Mammary epithelial cell (primary cell): ENCODE measurements at regions of chr11 and their contacts with region 1.

Region 1: DNA sequence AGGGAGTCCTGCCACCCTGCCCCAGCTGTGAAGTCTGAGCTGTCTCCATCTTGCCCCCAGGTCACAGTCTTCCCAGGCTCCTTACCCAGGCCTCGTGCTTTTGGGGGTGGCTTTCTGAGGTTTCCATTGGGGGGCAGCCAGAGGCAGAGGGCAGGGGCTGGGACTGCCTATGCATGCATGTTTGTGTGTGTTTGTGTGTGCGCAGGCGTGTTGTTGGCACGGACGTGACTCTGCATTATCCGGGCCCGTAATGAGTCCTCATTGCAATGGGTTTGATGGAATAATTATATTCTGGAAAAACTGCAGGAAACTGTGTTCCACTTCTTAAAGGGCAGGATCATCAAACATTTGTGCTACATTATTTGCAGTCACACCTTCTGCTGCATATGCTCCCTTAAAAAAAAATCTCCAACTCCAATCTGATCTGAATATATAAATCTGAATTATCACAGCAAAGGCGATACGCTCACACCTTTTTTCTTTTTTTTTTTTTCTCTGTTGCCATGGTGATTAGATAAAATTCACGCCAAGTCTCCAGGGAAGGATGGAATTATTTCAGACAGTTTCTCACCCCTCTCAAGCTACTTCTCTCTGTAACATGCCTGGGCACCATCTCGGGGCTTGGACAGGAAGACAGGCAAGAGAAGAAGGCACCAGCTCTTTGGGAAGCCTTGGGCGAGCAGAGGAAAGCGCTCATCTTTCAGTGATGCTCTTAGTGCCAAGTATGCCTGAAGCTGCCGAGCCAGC is 45.9 kb downstream of the DSCAML1 start:
- DNase-seq: no peak
- H3K4me3 ChIP-seq: no peak overlapping the region
- H3K27ac ChIP-seq: no peak overlapping the region
- H3K4me1 ChIP-seq: no peaks in the 10 kb centered on the region
- H3K27me3 ChIP-seq: no peaks in the 10 kb centered on the region
- CTCF ChIP-seq: no peak

Region 2: GRCh38 chr11:117799634-117800033 is 48.5 kb after region 1 on chr11:
- CTCF ChIA-PET with region 1: no interaction called
- dilution Hi-C with region 1: loop called (anchors 5 kb)
- in situ Hi-C with region 1: no loop called
- intact Hi-C with region 1: no loop called
- DNase-seq: no peak
- H3K4me3 ChIP-seq: no peak overlapping the region
- H3K27ac ChIP-seq: no peak overlapping the region
- H3K4me1 ChIP-seq: peaks cover 12% of the 10 kb centered on the region
- H3K27me3 ChIP-seq: peaks cover 18% of the 10 kb centered on the region
- CTCF ChIP-seq: no peak

Region 3: DNA sequence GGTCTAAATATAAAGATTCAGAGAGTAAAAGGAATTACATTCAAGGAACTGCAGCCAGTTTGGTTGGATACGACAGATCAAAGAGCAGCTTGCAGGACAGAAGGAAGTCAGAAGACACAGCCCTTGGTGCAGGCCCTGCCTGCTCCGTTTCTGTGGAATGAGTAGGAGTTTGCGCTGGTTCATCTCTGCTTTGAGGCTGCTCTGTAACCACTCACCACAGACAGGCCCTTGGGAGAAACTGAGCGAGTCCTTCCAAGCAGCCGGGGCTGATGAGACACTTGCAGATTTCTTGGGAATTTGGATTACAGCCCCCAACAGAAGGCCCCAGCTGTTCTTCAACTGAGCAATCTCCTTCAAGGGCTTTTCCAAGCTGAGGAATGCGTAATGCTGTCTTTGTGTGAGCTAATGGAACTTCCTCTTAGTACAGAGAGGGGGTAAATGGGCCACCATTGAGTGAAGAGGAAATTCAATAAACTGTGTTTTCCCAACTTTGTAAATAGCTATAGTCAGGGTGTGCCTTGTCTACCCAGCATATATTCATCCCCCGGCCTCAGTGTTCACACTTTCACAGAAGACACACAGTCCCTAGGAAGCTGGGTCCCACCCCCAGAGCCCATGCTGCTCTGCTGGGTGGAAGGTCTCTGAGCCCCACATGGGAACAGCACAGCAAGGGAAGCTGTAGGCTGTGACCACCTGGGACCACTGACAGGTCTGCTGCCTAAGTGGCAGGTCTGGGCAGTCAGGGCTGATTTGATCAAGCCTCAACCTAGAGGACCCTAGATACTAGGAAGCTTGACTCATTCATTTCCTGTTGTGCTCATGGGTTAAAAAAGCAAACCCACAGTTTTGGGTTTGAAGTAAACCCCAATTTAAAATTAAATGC is 251.7 kb after region 1 on chr11:
- CTCF ChIA-PET with region 1: no interaction called
- dilution Hi-C with region 1: no loop called
- in situ Hi-C with region 1: no loop called
- intact Hi-C with region 1: no loop called
- DNase-seq: no peak
- H3K4me3 ChIP-seq: no peak overlapping the region
- H3K27ac ChIP-seq: no peak overlapping the region
- H3K4me1 ChIP-seq: no peaks in the 10 kb centered on the region
- H3K27me3 ChIP-seq: no peaks in the 10 kb centered on the region
- CTCF ChIP-seq: no peak